ENCODE measurements at regions of chr2 and their contacts with region 1.

Region 1: DNA sequence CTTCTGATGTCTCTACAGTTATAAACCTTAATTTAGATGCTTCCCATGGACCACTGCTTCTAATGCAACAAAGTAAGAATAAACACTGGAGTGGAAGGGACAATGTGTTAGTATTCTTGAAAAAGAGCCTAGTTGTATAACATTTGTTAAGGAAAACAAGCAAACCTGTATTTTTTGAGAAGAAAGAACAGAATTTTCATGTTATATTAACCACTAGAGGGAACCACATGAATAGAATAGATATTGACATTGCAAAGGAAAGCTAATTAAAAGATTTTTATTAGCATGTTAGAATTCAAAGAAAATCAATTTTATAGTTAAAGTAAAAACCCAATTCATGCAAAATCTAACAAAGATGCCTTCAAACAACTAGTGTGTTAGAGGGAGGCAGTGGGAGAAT is 151.2 kb upstream of the BARD1 start:
- DNase-seq: no peak
- H3K4me3 ChIP-seq: no peak overlapping the region
- CTCF ChIP-seq: no peak

Region 2: GRCh38 chr2:215136669-215137328 is 176.1 kb after region 1 on chr2:
- in situ Hi-C with region 1: no loop called
- DNase-seq: no peak
- H3K4me3 ChIP-seq: no peak overlapping the region
- CTCF ChIP-seq: no peak

Region 3: GRCh38 chr2:215466097-215466909 is 505.6 kb after region 1 on chr2:
- in situ Hi-C with region 1: no loop called
- DNase-seq: no peak
- H3K4me3 ChIP-seq: no peak overlapping the region
- CTCF ChIP-seq: no peak

Region 4: GRCh38 chr2:215931256-215931903 is 970.7 kb after region 1 on chr2:
- in situ Hi-C with region 1: loop called (anchors 10 kb)
- DNase-seq: peak; percentile 76
- H3K4me3 ChIP-seq: no peak overlapping the region
- CTCF ChIP-seq: peak; percentile 97